Activated B cell treated with CpG ODN at 0.5 μM for 24 hours (primary cell): ENCODE measurements at regions of chr6 and their contacts with region 1.

Region 1: DNA sequence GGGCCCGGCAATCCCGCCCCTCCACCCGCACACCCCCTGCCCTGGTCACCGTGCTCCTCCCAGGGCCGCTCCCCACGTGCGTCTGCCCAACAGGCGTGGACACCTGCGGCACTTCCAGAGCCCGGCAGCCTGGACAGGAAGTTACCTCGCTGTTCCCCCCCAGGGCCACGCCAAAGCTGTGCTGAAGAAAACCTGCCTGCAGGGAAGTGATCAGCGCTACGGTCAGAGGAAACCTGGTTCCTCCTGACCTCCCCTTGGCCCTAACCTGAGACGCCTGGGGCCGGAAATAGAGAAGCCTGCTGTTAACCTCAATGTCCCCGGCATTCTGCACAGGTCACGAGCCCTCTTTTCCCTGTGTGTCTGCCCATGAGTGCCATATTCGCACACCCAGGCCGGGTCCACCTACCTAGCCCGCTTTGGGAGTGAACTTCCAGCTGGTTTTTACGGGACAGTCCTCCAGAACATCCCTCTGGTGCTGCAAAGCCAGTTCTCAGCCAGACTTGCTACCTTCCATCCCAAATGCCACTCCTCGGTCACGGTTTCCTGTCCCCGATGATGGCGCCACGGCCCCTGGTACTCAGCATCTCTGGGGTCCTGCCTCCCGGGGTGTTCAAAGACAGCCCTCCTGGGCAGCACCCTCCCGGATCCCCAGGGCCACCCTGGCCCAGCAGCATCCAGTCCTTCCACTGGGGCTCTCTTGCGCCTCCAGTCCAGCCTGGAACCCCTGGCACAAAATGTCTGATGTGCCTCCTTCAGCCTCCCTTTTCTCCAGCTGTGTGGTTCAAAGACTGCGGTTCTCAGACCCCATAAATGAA is 12.0 kb upstream of the IRF4 start:
- DNase-seq: no peak
- ATAC-seq: peak; percentile 38
- H3K4me3 Mint-ChIP-seq: peak overlapping the region; percentile 12
- H3K27ac Mint-ChIP-seq: peak overlapping the region; percentile 33
- H3K4me1 Mint-ChIP-seq: peaks cover 58% of the 10 kb centered on the region
- H3K27me3 Mint-ChIP-seq: no peaks in the 10 kb centered on the region
- CTCF ChIP-seq: no peak

Region 2: GRCh38 chr6:319177-320131 is 60.1 kb before region 1 on chr6:
- CTCF ChIA-PET with region 1: no interaction called
- POLR2A ChIA-PET with region 1: no interaction called
- intact Hi-C with region 1: loop called (anchors 2 kb)
- DNase-seq: peak; percentile 7
- ATAC-seq: peak; percentile 58
- H3K4me3 Mint-ChIP-seq: peak overlapping the region; percentile 29
- H3K27ac Mint-ChIP-seq: peak overlapping the region; percentile 28
- H3K4me1 Mint-ChIP-seq: peaks cover 46% of the 10 kb centered on the region
- H3K27me3 Mint-ChIP-seq: no peaks in the 10 kb centered on the region
- CTCF ChIP-seq: no peak

Region 3: GRCh38 chr6:331622-332531 is 47.7 kb before region 1 on chr6:
- CTCF ChIA-PET with region 1: no interaction called
- POLR2A ChIA-PET with region 1: no interaction called
- intact Hi-C with region 1: no loop called
- DNase-seq: peak; percentile 11
- ATAC-seq: peak; percentile 13
- H3K4me3 Mint-ChIP-seq: no peak overlapping the region
- H3K27ac Mint-ChIP-seq: no peak overlapping the region
- H3K4me1 Mint-ChIP-seq: peaks cover 31% of the 10 kb centered on the region
- H3K27me3 Mint-ChIP-seq: no peaks in the 10 kb centered on the region
- CTCF ChIP-seq: no peak

Region 4: DNA sequence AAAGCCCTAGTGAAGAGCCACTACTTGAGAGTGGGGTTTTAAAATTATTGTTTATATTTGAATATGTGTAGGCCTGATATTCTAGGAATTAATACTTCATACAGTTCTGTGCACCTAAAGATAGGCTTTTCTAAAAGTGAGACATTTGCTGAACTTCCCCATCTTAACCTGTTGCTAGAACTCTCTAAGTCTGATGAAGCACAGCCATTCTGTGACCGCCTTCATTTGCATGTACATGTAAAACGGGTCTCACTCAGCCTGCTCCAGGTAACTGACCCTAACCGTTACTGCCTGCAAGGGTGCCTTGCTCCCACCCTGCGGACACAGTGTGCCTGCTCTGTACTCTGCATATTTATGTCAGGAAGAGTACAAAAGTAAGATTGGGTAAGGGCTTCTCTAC is 32.3 kb before region 1 on chr6:
- CTCF ChIA-PET with region 1: no interaction called
- POLR2A ChIA-PET with region 1: interaction called, 5 read pairs
- intact Hi-C with region 1: loop called (anchors 2 kb)
- DNase-seq: no peak
- ATAC-seq: peak; percentile 92
- H3K4me3 Mint-ChIP-seq: peak overlapping the region; percentile 59
- H3K27ac Mint-ChIP-seq: peak overlapping the region; percentile 77
- H3K4me1 Mint-ChIP-seq: peaks cover 68% of the 10 kb centered on the region
- H3K27me3 Mint-ChIP-seq: no peaks in the 10 kb centered on the region
- CTCF ChIP-seq: no peak

Region 5: GRCh38 chr6:356828-357251 is 22.7 kb before region 1 on chr6:
- CTCF ChIA-PET with region 1: interaction called, 4 read pairs
- POLR2A ChIA-PET with region 1: interaction called, 12 read pairs
- intact Hi-C with region 1: loop called (anchors 2 kb)
- DNase-seq: no peak
- ATAC-seq: peak; percentile 85
- H3K4me3 Mint-ChIP-seq: peak overlapping the region; percentile 68
- H3K27ac Mint-ChIP-seq: peak overlapping the region; percentile 93
- H3K4me1 Mint-ChIP-seq: peaks cover 73% of the 10 kb centered on the region
- H3K27me3 Mint-ChIP-seq: no peaks in the 10 kb centered on the region
- CTCF ChIP-seq: no peak

Region 6: GRCh38 chr6:364609-365540 is 14.7 kb before region 1 on chr6:
- CTCF ChIA-PET with region 1: interaction called, 4 read pairs
- POLR2A ChIA-PET with region 1: interaction called, 12 read pairs
- intact Hi-C with region 1: no loop called
- DNase-seq: no peak
- ATAC-seq: peak; percentile 76
- H3K4me3 Mint-ChIP-seq: peak overlapping the region; percentile 42
- H3K27ac Mint-ChIP-seq: peak overlapping the region; percentile 32
- H3K4me1 Mint-ChIP-seq: peaks cover 56% of the 10 kb centered on the region
- H3K27me3 Mint-ChIP-seq: peaks cover 2% of the 10 kb centered on the region
- CTCF ChIP-seq: no peak

Region 7: DNA sequence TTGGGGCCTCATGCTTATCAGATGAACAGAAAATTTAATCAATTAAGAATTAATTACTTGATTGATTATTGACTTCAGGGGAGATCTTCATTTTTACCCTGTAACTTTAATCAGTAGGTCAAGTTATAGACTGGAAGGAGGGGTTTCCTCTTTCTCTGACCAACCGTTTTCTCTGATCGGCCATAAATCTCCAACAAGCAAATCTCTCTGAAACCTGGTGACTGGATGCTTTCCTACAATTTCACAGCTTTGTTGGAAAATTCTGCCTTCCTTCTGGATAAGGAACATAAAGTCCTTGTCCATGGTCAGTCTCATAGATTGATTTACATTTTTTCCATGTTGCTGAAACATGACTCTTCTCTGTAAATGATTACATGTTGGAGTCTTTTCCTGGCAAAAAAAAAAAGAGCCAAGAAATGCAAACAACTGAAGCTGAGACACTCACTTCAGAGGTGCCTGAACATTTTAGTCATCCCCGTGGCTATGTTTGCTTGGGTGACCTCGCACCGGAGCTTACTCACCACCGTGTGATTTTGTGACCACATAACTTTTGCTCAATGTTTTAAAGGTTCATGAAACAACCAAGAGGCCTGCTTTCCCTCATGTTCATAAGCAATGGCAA is 43.0 kb after region 1 on chr6:
- CTCF ChIA-PET with region 1: no interaction called
- POLR2A ChIA-PET with region 1: no interaction called
- intact Hi-C with region 1: no loop called
- DNase-seq: no peak
- ATAC-seq: peak; percentile 96
- H3K4me3 Mint-ChIP-seq: peak overlapping the region; percentile 7
- H3K27ac Mint-ChIP-seq: peak overlapping the region; percentile 75
- H3K4me1 Mint-ChIP-seq: peaks cover 15% of the 10 kb centered on the region
- H3K27me3 Mint-ChIP-seq: no peaks in the 10 kb centered on the region
- CTCF ChIP-seq: no peak

Region 8: DNA sequence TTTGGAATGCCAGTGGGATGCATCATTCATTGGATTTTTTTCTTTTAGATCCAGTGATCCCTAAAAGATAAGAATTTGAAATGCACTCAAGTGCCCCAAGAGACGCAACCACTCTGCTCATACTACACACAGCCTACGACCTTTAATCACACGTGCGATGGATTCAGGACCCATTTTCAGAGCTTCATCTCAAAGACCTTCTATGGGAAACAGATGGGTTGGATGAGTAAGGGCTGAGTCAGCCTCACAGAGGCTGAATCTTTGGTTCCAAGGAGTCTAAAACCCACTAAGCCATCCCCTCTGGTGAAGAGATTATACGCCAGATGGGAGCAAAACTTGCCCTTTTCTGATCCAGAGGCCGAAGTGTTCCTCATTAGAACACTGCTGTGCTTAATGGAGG is 579.0 kb after region 1 on chr6:
- CTCF ChIA-PET with region 1: no interaction called
- POLR2A ChIA-PET with region 1: no interaction called
- intact Hi-C with region 1: no loop called
- DNase-seq: no peak
- ATAC-seq: no peak
- H3K4me3 Mint-ChIP-seq: no peak overlapping the region
- H3K27ac Mint-ChIP-seq: no peak overlapping the region
- H3K4me1 Mint-ChIP-seq: no peaks in the 10 kb centered on the region
- H3K27me3 Mint-ChIP-seq: peaks cover 8% of the 10 kb centered on the region
- CTCF ChIP-seq: no peak